Activated CD4-positive, alpha-beta T cell treated with anti-CD3 and anti-CD28 coated beads for 36 hours (primary cell): ENCODE measurements at regions of chr9 and their contacts with region 1.

Region 1: GRCh38 chr9:98074115-98074990 is 17.8 kb downstream of the NANS start:
- DNase-seq: peak; percentile 81
- ATAC-seq: no peak
- H3K4me3 Mint-ChIP-seq: no peak overlapping the region
- H3K27ac Mint-ChIP-seq: peak overlapping the region; percentile 90
- H3K4me1 Mint-ChIP-seq: peaks cover 34% of the 10 kb centered on the region
- H3K27me3 Mint-ChIP-seq: no peaks in the 10 kb centered on the region

Region 2: GRCh38 chr9:98101868-98102273 is 27.5 kb after region 1 on chr9:
- CTCF ChIA-PET with region 1: interaction called, 5 read pairs
- POLR2A ChIA-PET with region 1: interaction called, 3 read pairs
- intact Hi-C with region 1: loop called (anchors 1 to 2 kb)
- DNase-seq: peak; percentile 86
- ATAC-seq: peak; percentile 96
- H3K4me3 Mint-ChIP-seq: peak overlapping the region; percentile 49
- H3K27ac Mint-ChIP-seq: peak overlapping the region; percentile 95
- H3K4me1 Mint-ChIP-seq: peaks cover 84% of the 10 kb centered on the region
- H3K27me3 Mint-ChIP-seq: no peaks in the 10 kb centered on the region

Region 3: GRCh38 chr9:98192503-98193335 is 118.4 kb after region 1 on chr9 and contains the start of gene CORO2A:
- CTCF ChIA-PET with region 1: interaction called, 7 read pairs
- POLR2A ChIA-PET with region 1: no interaction called
- intact Hi-C with region 1: loop called in 1 of 2 experiments (anchors 1 kb)
- DNase-seq: peak; percentile 83
- ATAC-seq: peak; percentile 78
- H3K4me3 Mint-ChIP-seq: peak within 1 kb of the TSS; percentile 78
- H3K27ac Mint-ChIP-seq: peak within 1 kb of the TSS; percentile 65
- H3K4me1 Mint-ChIP-seq: peaks cover 26% of the 10 kb centered on the region
- H3K27me3 Mint-ChIP-seq: no peaks in the 10 kb centered on the region
- total RNA-seq, gene CORO2A: 9.7 to 10.3 TPM

Region 4: DNA sequence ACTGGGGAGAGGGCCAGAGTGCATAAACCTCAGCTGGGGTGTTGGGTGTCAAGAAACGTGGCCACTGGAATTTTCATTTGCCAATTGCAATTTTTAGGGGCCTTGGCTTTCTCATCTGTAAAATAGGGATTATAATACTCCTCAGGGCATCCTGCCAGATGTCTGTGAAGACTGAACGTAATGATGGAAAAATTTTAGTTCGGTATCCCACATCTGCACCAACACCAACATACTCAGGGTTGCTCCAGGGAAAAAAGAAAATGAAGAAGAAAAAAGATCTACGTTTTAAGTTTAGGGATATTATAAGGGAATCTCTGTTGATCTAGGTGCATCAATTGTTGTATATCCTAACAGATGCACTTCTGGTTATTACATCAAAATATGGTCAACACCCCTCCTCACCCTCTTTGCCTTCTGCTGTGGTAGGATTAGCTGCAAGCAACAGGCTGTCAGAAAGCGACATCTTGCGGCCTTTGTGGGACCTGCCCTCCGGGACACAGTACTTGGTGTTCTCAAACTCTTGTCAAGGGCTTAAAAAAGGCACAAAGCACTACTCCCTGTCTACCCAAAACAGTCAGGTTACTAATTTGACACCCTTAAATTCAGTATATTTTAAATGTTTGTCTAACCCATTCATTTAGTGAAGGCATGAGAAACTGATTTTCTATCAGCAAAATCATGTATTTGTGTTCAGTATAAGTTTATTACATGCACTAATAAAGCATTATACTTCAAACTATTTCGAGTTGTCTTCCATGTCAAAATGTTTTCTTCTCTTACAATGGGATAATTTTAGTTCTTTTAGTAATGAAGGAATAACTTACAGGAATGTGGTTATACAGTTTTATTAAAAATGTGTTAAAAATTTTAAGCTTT is 189.4 kb after region 1 on chr9:
- CTCF ChIA-PET with region 1: interaction called, 6 read pairs
- POLR2A ChIA-PET with region 1: no interaction called
- intact Hi-C with region 1: loop called (anchors 1 kb)
- DNase-seq: peak; percentile 91
- ATAC-seq: peak; percentile 99
- H3K4me3 Mint-ChIP-seq: no peak overlapping the region
- H3K27ac Mint-ChIP-seq: no peak overlapping the region
- H3K4me1 Mint-ChIP-seq: no peaks in the 10 kb centered on the region
- H3K27me3 Mint-ChIP-seq: no peaks in the 10 kb centered on the region